HCT116 (cell line): ENCODE measurements at regions of chr6 and their contacts with region 1.

Region 1: DNA sequence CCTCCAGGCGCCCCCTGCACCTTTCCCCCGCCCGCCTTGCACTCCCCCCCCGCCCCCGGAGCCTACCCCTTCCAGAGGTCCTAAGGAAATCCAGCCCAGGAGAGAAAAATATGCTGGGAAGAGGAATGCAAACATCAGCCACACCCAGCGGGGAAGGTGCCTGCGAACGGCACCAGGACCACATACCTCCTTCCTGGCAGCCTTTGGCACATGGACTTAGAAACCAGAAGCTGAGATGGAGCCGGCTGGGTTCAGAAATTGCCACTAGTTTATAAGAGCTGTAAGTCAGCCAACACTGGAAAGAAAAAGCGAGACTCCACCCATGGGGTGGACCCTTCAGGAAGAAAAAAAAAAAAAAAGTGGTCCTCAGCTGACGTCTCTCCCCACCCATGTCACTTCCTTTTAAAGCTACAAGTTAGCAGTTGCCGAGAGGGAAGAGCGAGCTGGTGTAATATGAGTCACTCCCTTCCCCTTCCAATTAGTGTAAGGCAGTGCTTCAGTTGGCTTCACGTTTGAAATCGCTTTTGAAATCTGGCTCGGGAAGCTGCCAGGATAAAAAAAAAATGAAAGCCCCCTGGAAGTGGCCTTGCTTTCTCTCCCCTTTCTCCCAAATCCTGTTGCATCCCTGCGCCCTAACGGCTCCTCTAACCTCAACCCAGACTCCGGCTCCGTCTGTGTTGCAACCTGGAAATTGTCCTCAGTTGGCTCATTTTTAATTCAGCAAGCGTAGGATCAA is at the start of gene AGPAT4:
- DNase-seq: peak; percentile 92
- ATAC-seq: peak; percentile 90
- H3K4me3 ChIP-seq: peak within 1 kb of the TSS; percentile 73 to 78
- H3K27ac ChIP-seq: peak within 1 kb of the TSS; percentile 40
- H3K4me1 ChIP-seq: peaks cover 4 to 40% of the 10 kb centered on the region in 2 experiments; a peak in 2 of 4 replicates
- H3K27me3 ChIP-seq: no peaks in the 10 kb centered on the region
- CTCF ChIP-seq: no peak
- POLR2A ChIP-seq: no peak
- RAD21 ChIP-seq: peak; percentile 23; the same call in 1 of the 2 replicates
- total RNA-seq, gene AGPAT4: 15.5 TPM

Region 2: DNA sequence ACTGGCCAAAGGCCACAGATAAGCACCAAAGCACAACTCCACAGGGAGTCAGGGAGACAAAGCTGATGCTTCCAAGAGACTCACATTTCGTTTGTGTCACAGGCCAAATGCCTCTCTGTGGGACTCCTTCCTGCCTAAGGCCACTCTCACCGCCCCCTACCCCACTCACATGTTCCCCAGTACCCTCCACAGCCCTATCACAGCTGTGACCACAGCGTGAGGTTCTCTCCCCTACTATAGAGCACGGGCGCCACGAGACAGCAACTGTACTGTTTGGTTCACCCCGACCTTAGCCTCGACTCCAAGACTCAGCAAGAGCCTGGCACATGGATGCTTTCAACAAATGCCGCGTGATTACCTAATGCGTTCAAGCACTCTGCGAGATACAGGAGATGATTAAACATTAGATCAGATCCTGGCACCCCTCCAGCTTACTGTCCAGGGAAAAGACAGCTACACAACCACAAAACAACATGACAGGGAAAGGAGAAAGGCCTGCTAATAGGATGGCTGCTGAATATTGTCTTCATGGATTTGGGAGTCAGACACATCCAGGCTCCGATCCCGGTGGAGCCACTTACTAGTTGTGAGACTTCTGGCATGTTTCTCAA is 105.5 kb before region 1 on chr6:
- CTCF ChIA-PET with region 1: no interaction called
- POLR2A ChIA-PET with region 1: no interaction called
- RAD21 ChIA-PET with region 1: no interaction called
- intact Hi-C with region 1: loop called (anchors 10 kb)
- DNase-seq: peak; percentile 86
- ATAC-seq: peak; percentile 89
- H3K4me3 ChIP-seq: no peak overlapping the region
- H3K27ac ChIP-seq: peak overlapping the region; percentile 34
- H3K4me1 ChIP-seq: peaks cover 15 to 27% of the 10 kb centered on the region in 2 experiments
- H3K27me3 ChIP-seq: no peaks in the 10 kb centered on the region
- CTCF ChIP-seq: no peak
- POLR2A ChIP-seq: no peak
- RAD21 ChIP-seq: no peak

Region 3: DNA sequence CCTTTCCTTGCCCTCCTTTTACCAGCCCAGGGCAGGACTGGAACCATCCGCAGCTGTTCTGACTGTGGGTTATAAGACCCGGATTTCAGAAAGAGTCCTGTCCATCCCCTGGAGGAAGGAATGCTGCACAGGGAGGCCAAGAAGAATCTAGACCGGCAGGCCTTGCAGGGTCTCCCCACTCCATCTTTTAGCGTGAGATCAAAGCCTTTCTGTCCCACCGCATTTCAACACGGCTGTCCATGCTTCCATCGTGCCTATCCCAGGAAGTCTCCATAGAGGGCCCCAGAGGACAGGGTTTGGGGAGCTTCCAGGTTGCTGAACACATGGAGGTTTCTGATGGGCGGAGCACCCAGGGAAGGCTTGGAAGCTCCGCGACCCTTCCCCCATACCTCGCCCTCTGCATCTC is 79.3 kb after region 1 on chr6:
- CTCF ChIA-PET with region 1: no interaction called
- POLR2A ChIA-PET with region 1: interaction called, 3 read pairs
- RAD21 ChIA-PET with region 1: no interaction called
- intact Hi-C with region 1: loop called (anchors 10 kb)
- DNase-seq: peak; percentile 52
- ATAC-seq: peak; percentile 96
- H3K4me3 ChIP-seq: no peak overlapping the region
- H3K27ac ChIP-seq: no peak overlapping the region
- H3K4me1 ChIP-seq: no peaks in the 10 kb centered on the region
- H3K27me3 ChIP-seq: no peaks in the 10 kb centered on the region
- CTCF ChIP-seq: peak in 2 of 3 experiments; percentile 54 to 56; a peak in 3 of 6 replicates
- POLR2A ChIP-seq: no peak
- RAD21 ChIP-seq: peak; percentile 65